ENCODE measurements at regions of chr7 and their contacts with region 1.

Region 1: DNA sequence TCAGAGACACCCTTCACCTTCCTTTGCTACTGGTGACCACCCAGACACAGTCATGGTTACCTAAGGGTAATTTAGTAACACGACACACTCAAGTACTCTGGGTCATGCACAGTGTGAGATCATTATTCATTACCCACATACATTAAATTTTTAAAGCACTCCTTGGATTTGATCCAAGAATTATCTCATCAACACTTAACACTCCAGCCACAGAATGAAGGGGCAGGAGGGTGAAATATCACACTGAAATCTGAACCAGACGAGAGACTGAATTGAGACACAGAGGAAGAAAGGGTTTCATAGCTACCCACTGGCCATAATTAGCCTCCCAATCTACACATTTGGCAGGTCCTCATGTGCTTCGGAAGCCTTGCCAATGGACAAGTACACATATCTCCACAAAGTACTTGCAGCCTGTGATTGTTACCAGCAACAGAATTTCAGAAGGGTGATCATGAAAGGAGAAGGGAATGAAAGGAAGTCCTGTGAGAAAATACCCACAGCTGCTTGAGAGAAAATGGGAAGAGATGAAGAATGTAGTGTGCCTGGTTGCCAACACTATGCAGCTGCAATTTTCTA is 189.3 kb downstream of the POLR1F start:
- DNase-seq: no peak
- H3K4me3 Mint-ChIP-seq: no peak overlapping the region
- H3K27ac Mint-ChIP-seq: no peak overlapping the region
- H3K4me1 Mint-ChIP-seq: no peaks in the 10 kb centered on the region
- H3K27me3 Mint-ChIP-seq: no peaks in the 10 kb centered on the region

Region 2: DNA sequence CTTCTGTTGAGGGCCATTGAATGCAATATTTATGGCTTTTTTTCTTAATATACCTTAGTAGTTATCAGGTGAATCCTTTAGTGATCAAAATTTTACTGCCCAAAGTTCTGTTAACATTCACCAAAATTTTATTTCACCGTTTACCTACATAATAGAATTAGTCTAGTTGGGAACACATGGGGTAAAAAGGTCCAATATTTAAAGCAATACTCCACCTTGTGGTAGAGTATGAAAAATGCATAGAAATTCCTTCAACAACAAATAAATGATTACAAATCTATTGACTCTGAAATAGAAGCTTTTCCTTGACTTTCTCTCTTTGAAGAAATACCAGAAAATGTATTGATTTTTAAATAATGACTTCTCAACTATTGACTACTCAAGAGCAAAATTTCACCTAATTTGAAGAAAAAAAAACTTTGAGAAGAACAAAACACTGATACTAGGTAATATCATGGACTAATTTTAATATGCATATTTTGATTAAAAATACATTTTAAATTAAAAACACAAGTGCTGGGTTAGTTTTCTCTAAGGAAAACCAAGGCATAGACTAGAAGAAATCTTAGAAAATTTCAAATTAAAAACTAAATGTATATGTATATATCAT is 146.0 kb after region 1 on chr7:
- CTCF ChIA-PET with region 1: no interaction called
- intact Hi-C with region 1: loop called (anchors 10 kb)
- DNase-seq: no peak
- H3K4me3 Mint-ChIP-seq: no peak overlapping the region
- H3K27ac Mint-ChIP-seq: no peak overlapping the region
- H3K4me1 Mint-ChIP-seq: peaks cover 7% of the 10 kb centered on the region
- H3K27me3 Mint-ChIP-seq: peaks cover 3% of the 10 kb centered on the region

Measured in activated naive CD4-positive, alpha-beta T cell treated with anti-CD3 and anti-CD28 coated beads for 36 hours (primary cell).